GM12878 (cell line): ENCODE measurements at regions of chr5 and their contacts with region 1.

Region 1: DNA sequence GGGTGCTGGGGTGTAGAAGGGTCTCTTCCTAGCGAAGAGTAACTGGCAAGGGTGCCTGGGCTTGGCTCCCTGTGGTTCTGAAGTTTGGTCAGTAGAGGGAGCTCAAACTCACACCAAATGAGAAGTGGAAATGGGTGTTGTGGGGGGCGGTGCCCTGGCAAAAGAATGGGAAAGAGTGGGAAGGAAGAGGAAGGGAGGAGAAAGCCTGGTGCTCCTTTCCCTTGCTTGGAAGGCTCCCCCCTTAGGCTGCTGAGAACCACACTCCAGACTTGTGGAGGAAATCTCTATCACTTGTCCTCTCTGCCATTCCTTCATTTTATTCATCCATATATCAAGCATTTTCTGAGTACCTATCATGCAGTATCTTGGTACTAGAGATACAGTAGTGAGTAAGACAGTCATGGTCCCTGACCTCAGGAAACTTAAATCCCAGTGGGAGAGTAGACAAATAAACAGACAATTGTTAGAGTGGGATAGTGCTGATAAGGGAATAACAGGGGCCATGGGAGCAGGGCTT is 13.0 kb downstream of the SLC4A9 start:
- DNase-seq: no peak
- ATAC-seq: peak; percentile 86
- H3K4me3 ChIP-seq: no peak overlapping the region
- H3K27ac ChIP-seq: no peak overlapping the region
- H3K4me1 ChIP-seq: no peaks in the 10 kb centered on the region
- H3K27me3 ChIP-seq: no peaks in the 10 kb centered on the region
- CTCF ChIP-seq: peak; percentile 81 to 88 (median 83)
- EP300 ChIP-seq: no peak
- POLR2A ChIP-seq: no peak
- RAD21 ChIP-seq: peak; percentile 85

Region 2: GRCh38 chr5:139560752-139561654 is 812.0 kb before region 1 on chr5 and contains the start of gene UBE2D2:
- CTCF ChIA-PET with region 1: no interaction called
- POLR2A ChIA-PET with region 1: no interaction called
- RAD21 ChIA-PET with region 1: no interaction called
- SMC1A ChIA-PET with region 1: no interaction called
- in situ Hi-C with region 1: no loop called
- intact Hi-C with region 1: no loop called
- DNase-seq: peak; percentile 92
- ATAC-seq: peak; percentile 87
- H3K4me3 ChIP-seq: peak within 1 kb of the TSS; percentile 75
- H3K27ac ChIP-seq: peak within 1 kb of the TSS; percentile 69
- H3K4me1 ChIP-seq: peaks cover 20% of the 10 kb centered on the region
- H3K27me3 ChIP-seq: no peaks in the 10 kb centered on the region
- CTCF ChIP-seq: no peak
- EP300 ChIP-seq: no peak
- POLR2A ChIP-seq: peak; percentile 87
- RAD21 ChIP-seq: no peak
- polyA plus RNA-seq, gene UBE2D2: 58.6 to 120 TPM

Region 3: GRCh38 chr5:140327589-140327988 is 45.4 kb before region 1 on chr5:
- CTCF ChIA-PET with region 1: no interaction called
- POLR2A ChIA-PET with region 1: no interaction called
- RAD21 ChIA-PET with region 1: no interaction called
- SMC1A ChIA-PET with region 1: no interaction called
- in situ Hi-C with region 1: no loop called
- intact Hi-C with region 1: no loop called
- DNase-seq: no peak
- ATAC-seq: no peak
- H3K4me3 ChIP-seq: no peak overlapping the region
- H3K27ac ChIP-seq: no peak overlapping the region
- H3K4me1 ChIP-seq: no peaks in the 10 kb centered on the region
- H3K27me3 ChIP-seq: no peaks in the 10 kb centered on the region
- CTCF ChIP-seq: no peak
- EP300 ChIP-seq: no peak
- POLR2A ChIP-seq: no peak
- RAD21 ChIP-seq: no peak

Region 4: DNA sequence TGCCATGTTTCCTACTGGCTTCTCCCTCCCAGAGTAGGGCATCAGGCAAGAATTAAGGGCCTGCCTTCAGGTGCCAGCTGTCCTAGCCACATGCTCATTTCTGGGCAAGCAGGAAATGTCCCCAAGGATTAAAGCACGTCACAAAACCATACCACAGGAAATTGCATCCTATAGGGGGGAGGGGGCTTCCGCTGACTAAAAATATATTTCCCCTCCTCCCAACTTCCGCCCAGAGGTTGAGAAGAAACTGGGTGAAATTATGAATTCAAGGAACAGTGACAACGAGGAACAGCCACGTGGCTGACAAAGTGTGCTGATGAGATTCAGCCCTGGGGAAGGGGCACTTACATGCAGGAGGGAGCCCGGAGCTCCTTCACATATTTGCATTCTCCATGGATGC is 30.7 kb before region 1 on chr5:
- CTCF ChIA-PET with region 1: no interaction called
- POLR2A ChIA-PET with region 1: no interaction called
- RAD21 ChIA-PET with region 1: no interaction called
- SMC1A ChIA-PET with region 1: no interaction called
- in situ Hi-C with region 1: no loop called
- intact Hi-C with region 1: no loop called
- DNase-seq: peak; percentile 60
- ATAC-seq: peak; percentile 17
- H3K4me3 ChIP-seq: no peak overlapping the region
- H3K27ac ChIP-seq: peak overlapping the region; percentile 72
- H3K4me1 ChIP-seq: peaks cover 42% of the 10 kb centered on the region
- H3K27me3 ChIP-seq: no peaks in the 10 kb centered on the region
- CTCF ChIP-seq: no peak
- EP300 ChIP-seq: peak in 1 of 2 experiments; percentile 34; a peak in 2 of 4 replicates
- POLR2A ChIP-seq: no peak
- RAD21 ChIP-seq: no peak

Region 5: GRCh38 chr5:140388052-140388451 is 15.0 kb after region 1 on chr5:
- CTCF ChIA-PET with region 1: interaction called, 28 read pairs
- POLR2A ChIA-PET with region 1: interaction called, 4 read pairs
- RAD21 ChIA-PET with region 1: no interaction called
- SMC1A ChIA-PET with region 1: interaction called, 6 read pairs
- in situ Hi-C with region 1: no loop called
- intact Hi-C with region 1: no loop called
- DNase-seq: no peak
- ATAC-seq: no peak
- H3K4me3 ChIP-seq: no peak overlapping the region
- H3K27ac ChIP-seq: no peak overlapping the region
- H3K4me1 ChIP-seq: no peaks in the 10 kb centered on the region
- H3K27me3 ChIP-seq: no peaks in the 10 kb centered on the region
- CTCF ChIP-seq: no peak
- EP300 ChIP-seq: no peak
- POLR2A ChIP-seq: no peak
- RAD21 ChIP-seq: no peak

Region 6: GRCh38 chr5:140481758-140482157 is 108.7 kb after region 1 on chr5:
- CTCF ChIA-PET with region 1: interaction called, 14 read pairs
- POLR2A ChIA-PET with region 1: no interaction called
- RAD21 ChIA-PET with region 1: interaction called, 3 read pairs
- SMC1A ChIA-PET with region 1: no interaction called
- in situ Hi-C with region 1: no loop called
- intact Hi-C with region 1: no loop called
- DNase-seq: no peak
- ATAC-seq: no peak
- H3K4me3 ChIP-seq: no peak overlapping the region
- H3K27ac ChIP-seq: no peak overlapping the region
- H3K4me1 ChIP-seq: no peaks in the 10 kb centered on the region
- H3K27me3 ChIP-seq: no peaks in the 10 kb centered on the region
- CTCF ChIP-seq: no peak
- EP300 ChIP-seq: no peak
- POLR2A ChIP-seq: no peak
- RAD21 ChIP-seq: no peak

Region 7: DNA sequence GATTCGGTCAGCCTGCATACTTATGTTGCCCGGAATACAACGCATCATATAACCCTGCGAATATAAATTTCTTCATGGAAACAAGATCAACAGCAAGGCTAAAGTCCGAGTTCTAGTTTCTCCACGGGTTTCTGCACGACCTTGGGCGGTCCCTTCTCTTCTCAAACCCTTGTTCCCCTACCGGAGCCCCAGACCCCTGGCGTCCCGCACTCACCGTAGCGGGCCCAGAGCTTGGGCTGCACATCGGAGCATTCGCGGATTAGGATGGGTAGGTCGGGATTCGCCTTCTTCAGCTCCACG is 274.0 kb after region 1 on chr5:
- CTCF ChIA-PET with region 1: interaction called, 12 read pairs
- POLR2A ChIA-PET with region 1: no interaction called
- RAD21 ChIA-PET with region 1: interaction called, 6 read pairs
- SMC1A ChIA-PET with region 1: interaction called, 4 read pairs
- in situ Hi-C with region 1: no loop called
- intact Hi-C with region 1: no loop called
- DNase-seq: no peak
- ATAC-seq: no peak
- H3K4me3 ChIP-seq: peak overlapping the region; percentile 96
- H3K27ac ChIP-seq: peak overlapping the region; percentile 72
- H3K4me1 ChIP-seq: peaks cover 5% of the 10 kb centered on the region
- H3K27me3 ChIP-seq: no peaks in the 10 kb centered on the region
- CTCF ChIP-seq: no peak
- EP300 ChIP-seq: no peak
- POLR2A ChIP-seq: no peak
- RAD21 ChIP-seq: no peak

Region 8: DNA sequence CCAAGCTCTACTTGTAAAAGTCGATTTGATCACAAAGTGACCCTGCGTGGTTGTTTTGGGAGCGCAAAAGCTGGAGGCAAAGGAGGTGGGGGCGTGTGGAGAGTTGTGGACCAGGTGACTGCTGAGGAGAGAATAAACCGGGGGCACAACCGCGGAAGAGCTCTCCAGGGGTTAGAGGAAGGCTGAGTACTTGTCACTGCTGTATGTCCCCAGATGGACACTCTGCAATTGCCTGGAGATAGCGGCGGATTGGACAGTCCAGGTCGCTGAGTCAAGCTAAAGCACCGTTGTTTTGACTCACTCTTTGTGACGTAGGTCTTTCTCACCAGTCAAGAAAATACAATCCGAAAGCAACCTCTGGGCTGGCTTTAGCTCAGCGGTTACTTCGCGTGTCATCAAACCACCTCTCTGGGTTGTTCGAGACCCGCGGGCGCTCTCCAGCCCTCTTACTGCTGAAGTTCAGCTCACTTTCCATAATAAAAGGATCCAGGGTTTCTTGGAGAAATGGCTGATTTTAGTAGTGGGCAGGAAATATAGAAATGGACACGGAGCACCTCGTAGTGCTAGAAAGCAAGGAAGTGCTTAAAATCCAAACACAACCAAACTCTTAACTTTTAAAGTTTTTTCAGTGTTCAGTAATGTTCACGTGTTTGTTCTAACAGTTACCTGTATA is 352.9 kb after region 1 on chr5:
- CTCF ChIA-PET with region 1: interaction called, 24 read pairs
- POLR2A ChIA-PET with region 1: no interaction called
- RAD21 ChIA-PET with region 1: interaction called, 7 read pairs
- SMC1A ChIA-PET with region 1: interaction called, 9 read pairs
- in situ Hi-C with region 1: no loop called
- intact Hi-C with region 1: no loop called
- DNase-seq: peak; percentile 81
- ATAC-seq: peak; percentile 98
- H3K4me3 ChIP-seq: peak overlapping the region; percentile 66
- H3K27ac ChIP-seq: no peak overlapping the region
- H3K4me1 ChIP-seq: no peaks in the 10 kb centered on the region
- H3K27me3 ChIP-seq: no peaks in the 10 kb centered on the region
- CTCF ChIP-seq: no peak
- EP300 ChIP-seq: peak in 1 of 2 experiments; percentile 53; a peak in 1 of 4 replicates
- POLR2A ChIP-seq: no peak
- RAD21 ChIP-seq: no peak